PC-9 (cell line): ENCODE measurements at regions of chr14 and their contacts with region 1.

Region 1: DNA sequence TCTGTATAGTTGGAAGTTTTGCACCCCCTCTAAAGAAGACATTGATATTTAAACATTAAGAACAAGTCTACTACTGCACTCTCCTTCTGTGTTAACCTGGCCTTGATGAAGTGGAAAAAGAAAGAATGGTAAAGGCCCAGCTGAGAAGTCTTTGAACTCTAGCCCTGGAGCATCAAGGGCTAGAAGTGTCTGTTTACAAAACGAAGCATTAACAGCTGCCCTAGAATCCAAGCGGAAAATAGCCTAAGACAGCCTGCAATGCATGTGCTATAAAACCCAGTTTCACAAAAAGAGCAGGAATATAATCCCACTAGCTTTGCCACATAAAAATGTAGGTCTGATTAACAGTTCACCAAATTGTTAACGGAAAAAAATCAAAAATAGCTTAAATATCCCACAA is 60.5 kb downstream of the NUMB start:
- DNase-seq: no peak
- H3K4me3 ChIP-seq: no peak overlapping the region
- H3K27ac ChIP-seq: no peak overlapping the region
- H3K4me1 ChIP-seq: no peaks in the 10 kb centered on the region
- H3K27me3 ChIP-seq: no peaks in the 10 kb centered on the region
- CTCF ChIP-seq: no peak

Region 2: DNA sequence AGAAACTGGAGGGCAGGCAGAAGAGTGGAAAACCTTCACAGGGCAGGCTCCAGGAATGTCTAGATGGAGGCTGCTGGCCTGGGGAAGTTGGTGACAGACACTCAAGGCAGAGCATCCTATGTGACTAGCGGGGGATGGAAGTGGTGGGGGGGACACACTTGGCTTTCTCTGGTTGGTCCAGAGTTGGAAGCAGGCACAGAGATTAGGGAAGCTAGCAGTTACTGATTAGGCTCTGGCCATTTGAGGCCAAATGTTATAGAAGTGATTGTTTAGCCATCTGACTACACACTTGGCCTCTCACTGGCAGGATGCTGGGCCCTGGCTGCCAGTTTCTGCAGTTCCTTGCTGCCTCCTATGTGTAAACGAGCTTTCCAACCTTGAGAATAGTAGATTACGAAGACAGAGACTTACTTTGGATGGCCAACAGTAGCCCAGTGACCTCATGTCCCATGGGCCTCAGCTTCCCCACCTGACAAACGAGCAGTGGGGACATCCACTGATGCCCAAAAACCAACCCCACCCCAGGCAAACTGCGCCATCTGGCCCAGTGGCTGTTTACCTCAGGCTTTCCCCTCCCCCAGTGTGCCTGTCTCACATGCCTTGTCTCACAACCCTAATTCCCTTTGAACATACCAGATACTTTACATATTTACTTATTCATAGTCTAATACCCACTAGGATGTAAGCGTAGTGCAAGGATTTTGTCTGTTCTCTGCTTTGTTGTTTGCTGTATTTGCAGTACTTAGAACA is 57.8 kb before region 1 on chr14:
- CTCF ChIA-PET with region 1: interaction called, 19 read pairs
- POLR2A ChIA-PET with region 1: no interaction called
- intact Hi-C with region 1: no loop called
- DNase-seq: no peak
- H3K4me3 ChIP-seq: no peak overlapping the region
- H3K27ac ChIP-seq: no peak overlapping the region
- H3K4me1 ChIP-seq: no peaks in the 10 kb centered on the region
- H3K27me3 ChIP-seq: no peaks in the 10 kb centered on the region
- CTCF ChIP-seq: no peak